ENCODE measurements at regions of chr19 and their contacts with region 1.

Region 1: GRCh38 chr19:14136509-14137281 is at the start of gene ASF1B:
- DNase-seq: peak; percentile 99
- ATAC-seq: peak; percentile 79
- H3K4me3 ChIP-seq: peak within 1 kb of the TSS; percentile 44 to 94 (median 77)
- H3K4me3 Mint-ChIP-seq: peak within 1 kb of the TSS; percentile 88
- H3K27ac ChIP-seq: peak within 1 kb of the TSS; percentile 88 to 93
- H3K27ac Mint-ChIP-seq: peak within 1 kb of the TSS; percentile 92
- H3K4me1 ChIP-seq: peaks cover 9 to 23% of the 10 kb centered on the region in 2 donors
- H3K4me1 Mint-ChIP-seq: peaks cover 18% of the 10 kb centered on the region
- H3K27me3 ChIP-seq: no peaks in the 10 kb centered on the region
- H3K27me3 Mint-ChIP-seq: no peaks in the 10 kb centered on the region
- CTCF ChIP-seq: peak; percentile 87
- total RNA-seq, gene ASF1B: 2.5 and 4.0 TPM in 2 replicates

Region 2: GRCh38 chr19:13150187-13150930 is 986.3 kb before region 1 on chr19 and contains the starts of genes IER2 and STX10:
- CTCF ChIA-PET with region 1: no interaction called
- POLR2A ChIA-PET with region 1: no interaction called
- intact Hi-C with region 1: loop called (anchors 2 kb)
- DNase-seq: peak; percentile 96
- ATAC-seq: peak; percentile 53
- H3K4me3 ChIP-seq: peak within 1 kb of the TSS; percentile 82 to 100 (median 98)
- H3K4me3 Mint-ChIP-seq: peak within 1 kb of the TSS; percentile 92
- H3K27ac ChIP-seq: peak within 1 kb of the TSS; percentile 87 to 96
- H3K27ac Mint-ChIP-seq: peak within 1 kb of the TSS; percentile 94
- H3K4me1 ChIP-seq: peaks cover 9 to 32% of the 10 kb centered on the region in 2 donors
- H3K4me1 Mint-ChIP-seq: peaks cover 33% of the 10 kb centered on the region
- H3K27me3 ChIP-seq: no peaks in the 10 kb centered on the region
- H3K27me3 Mint-ChIP-seq: no peaks in the 10 kb centered on the region
- CTCF ChIP-seq: peak; percentile 66
- total RNA-seq, gene IER2: 181 and 189 TPM in 2 replicates
- total RNA-seq, gene STX10: 48.4 and 59.0 TPM in 2 replicates

Region 3: GRCh38 chr19:13880059-13881043 is 256.3 kb before region 1 on chr19:
- CTCF ChIA-PET with region 1: interaction called, 6 read pairs
- POLR2A ChIA-PET with region 1: no interaction called
- intact Hi-C with region 1: loop called (anchors 1 kb)
- DNase-seq: peak; percentile 96
- ATAC-seq: peak; percentile 98
- H3K4me3 ChIP-seq: peak overlapping the region in 3 of 5 experiments; percentile 12 to 27 (median 27)
- H3K4me3 Mint-ChIP-seq: peak overlapping the region; percentile 37
- H3K27ac ChIP-seq: no peak overlapping the region
- H3K27ac Mint-ChIP-seq: peak overlapping the region; percentile 61
- H3K4me1 ChIP-seq: peaks cover 26 to 34% of the 10 kb centered on the region in 2 donors
- H3K4me1 Mint-ChIP-seq: peaks cover 25% of the 10 kb centered on the region
- H3K27me3 ChIP-seq: peaks cover 0 to 3% (median 0%) of the 10 kb centered on the region in 4 experiments
- H3K27me3 Mint-ChIP-seq: no peaks in the 10 kb centered on the region
- CTCF ChIP-seq: peak; percentile 99

Region 4: GRCh38 chr19:13997651-13998002 is 139.1 kb before region 1 on chr19:
- CTCF ChIA-PET with region 1: no interaction called
- POLR2A ChIA-PET with region 1: no interaction called
- intact Hi-C with region 1: no loop called
- DNase-seq: no peak
- ATAC-seq: no peak
- H3K4me3 ChIP-seq: no peak overlapping the region
- H3K4me3 Mint-ChIP-seq: no peak overlapping the region
- H3K27ac ChIP-seq: no peak overlapping the region
- H3K27ac Mint-ChIP-seq: no peak overlapping the region
- H3K4me1 ChIP-seq: peaks cover 26 to 27% of the 10 kb centered on the region in 2 donors
- H3K4me1 Mint-ChIP-seq: peaks cover 27% of the 10 kb centered on the region
- H3K27me3 ChIP-seq: no peaks in the 10 kb centered on the region
- H3K27me3 Mint-ChIP-seq: no peaks in the 10 kb centered on the region
- CTCF ChIP-seq: no peak

Region 5: GRCh38 chr19:14081325-14082093 is 55.2 kb before region 1 on chr19:
- CTCF ChIA-PET with region 1: interaction called, 22 read pairs
- POLR2A ChIA-PET with region 1: interaction called, 3 read pairs
- intact Hi-C with region 1: loop called (anchors 1 kb)
- DNase-seq: peak; percentile 99
- ATAC-seq: peak; percentile 91
- H3K4me3 ChIP-seq: peak overlapping the region; percentile 65 to 89 (median 77)
- H3K4me3 Mint-ChIP-seq: peak overlapping the region; percentile 96
- H3K27ac ChIP-seq: peak overlapping the region; percentile 72 to 89
- H3K27ac Mint-ChIP-seq: peak overlapping the region; percentile 96
- H3K4me1 ChIP-seq: peaks cover 14 to 18% of the 10 kb centered on the region in 2 donors
- H3K4me1 Mint-ChIP-seq: peaks cover 12% of the 10 kb centered on the region
- H3K27me3 ChIP-seq: no peaks in the 10 kb centered on the region
- H3K27me3 Mint-ChIP-seq: no peaks in the 10 kb centered on the region
- CTCF ChIP-seq: peak; percentile 10

Region 6: GRCh38 chr19:14347999-14348889 is 211.5 kb after region 1 on chr19:
- CTCF ChIA-PET with region 1: interaction called, 51 read pairs
- POLR2A ChIA-PET with region 1: no interaction called
- intact Hi-C with region 1: loop called (anchors 2 kb)
- DNase-seq: peak; percentile 73
- ATAC-seq: peak; percentile 77
- H3K4me3 ChIP-seq: peak overlapping the region in 3 of 5 experiments; percentile 27 to 34 (median 34)
- H3K4me3 Mint-ChIP-seq: peak overlapping the region; percentile 27
- H3K27ac ChIP-seq: no peak overlapping the region
- H3K27ac Mint-ChIP-seq: no peak overlapping the region
- H3K4me1 ChIP-seq: peaks cover 21 to 24% of the 10 kb centered on the region in 2 donors
- H3K4me1 Mint-ChIP-seq: peaks cover 22% of the 10 kb centered on the region
- H3K27me3 ChIP-seq: no peaks in the 10 kb centered on the region
- H3K27me3 Mint-ChIP-seq: no peaks in the 10 kb centered on the region
- CTCF ChIP-seq: peak; percentile 89

Region 7: DNA sequence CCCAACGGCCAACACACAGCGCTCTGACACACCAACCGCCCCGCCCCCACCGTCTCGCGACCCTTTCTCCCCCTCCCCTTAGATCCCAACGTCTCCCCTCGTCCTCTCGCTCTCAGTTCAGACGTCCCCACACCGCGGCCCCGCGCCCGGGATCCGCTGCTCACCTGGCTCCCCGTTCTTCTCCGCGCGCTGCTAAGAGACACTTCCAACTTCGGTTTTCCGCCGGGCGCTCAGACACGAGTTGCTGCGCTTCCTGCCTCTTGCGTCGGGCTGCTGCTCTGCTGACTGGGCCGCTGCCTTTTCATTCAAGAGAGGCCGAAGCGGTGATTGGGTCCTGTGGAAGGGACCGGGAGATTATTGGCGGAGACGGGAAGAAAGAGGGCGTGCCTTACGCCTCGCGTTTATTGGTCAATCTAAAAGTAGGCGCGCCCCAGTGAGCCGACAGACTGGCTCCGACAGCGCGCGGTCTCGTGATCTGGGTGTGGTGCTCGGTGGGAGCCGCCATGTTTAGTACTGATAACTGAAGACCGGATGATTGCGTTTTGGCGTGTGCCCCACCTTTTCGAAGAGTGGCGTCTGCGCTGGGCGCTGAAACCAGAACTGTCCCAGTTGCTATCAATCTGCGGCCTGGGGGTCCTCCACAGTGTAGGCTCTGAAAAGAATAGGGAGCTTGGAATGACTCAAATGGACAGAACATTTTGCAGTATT is 282.6 kb after region 1 on chr19 and contains the start of gene DDX39A:
- CTCF ChIA-PET with region 1: interaction called, 4 read pairs
- POLR2A ChIA-PET with region 1: interaction called, 6 read pairs
- intact Hi-C with region 1: loop called (anchors 1 kb)
- DNase-seq: peak; percentile 99
- ATAC-seq: peak; percentile 91
- H3K4me3 ChIP-seq: peak within 1 kb of the TSS; percentile 30 to 89 (median 82)
- H3K4me3 Mint-ChIP-seq: peak within 1 kb of the TSS; percentile 89
- H3K27ac ChIP-seq: peak within 1 kb of the TSS; percentile 92 to 98
- H3K27ac Mint-ChIP-seq: peak within 1 kb of the TSS; percentile 96
- H3K4me1 ChIP-seq: peaks cover 36 to 50% of the 10 kb centered on the region in 2 donors
- H3K4me1 Mint-ChIP-seq: peaks cover 37% of the 10 kb centered on the region
- H3K27me3 ChIP-seq: no peaks in the 10 kb centered on the region
- H3K27me3 Mint-ChIP-seq: no peaks in the 10 kb centered on the region
- CTCF ChIP-seq: no peak
- total RNA-seq, gene DDX39A: 168 and 178 TPM in 2 replicates

Region 8: GRCh38 chr19:14517840-14518505 is 381.3 kb after region 1 on chr19 and contains the start of gene DNAJB1:
- CTCF ChIA-PET with region 1: interaction called, 6 read pairs
- POLR2A ChIA-PET with region 1: no interaction called
- intact Hi-C with region 1: loop called (anchors 1 kb)
- DNase-seq: no peak
- ATAC-seq: peak; percentile 52
- H3K4me3 ChIP-seq: peak within 1 kb of the TSS; percentile 88 to 98 (median 94)
- H3K4me3 Mint-ChIP-seq: peak within 1 kb of the TSS; percentile 96
- H3K27ac ChIP-seq: peak within 1 kb of the TSS; percentile 93 to 95
- H3K27ac Mint-ChIP-seq: peak within 1 kb of the TSS; percentile 99
- H3K4me1 ChIP-seq: peaks cover 44 to 48% of the 10 kb centered on the region in 2 donors
- H3K4me1 Mint-ChIP-seq: peaks cover 55% of the 10 kb centered on the region
- H3K27me3 ChIP-seq: no peaks in the 10 kb centered on the region
- H3K27me3 Mint-ChIP-seq: no peaks in the 10 kb centered on the region
- CTCF ChIP-seq: no peak
- total RNA-seq, gene DNAJB1: 72.8 and 82.1 TPM in 2 replicates

Measured in B cell (primary cell).